AG04449 (cell line): ENCODE measurements at regions of chr7 and their contacts with region 1.

Region 1: GRCh38 chr7:151008511-151009323 is 15.6 kb downstream of the ATG9B start:
- DNase-seq: no peak
- H3K4me3 ChIP-seq: peak overlapping the region; percentile 18
- CTCF ChIP-seq: peak; percentile 68

Region 2: DNA sequence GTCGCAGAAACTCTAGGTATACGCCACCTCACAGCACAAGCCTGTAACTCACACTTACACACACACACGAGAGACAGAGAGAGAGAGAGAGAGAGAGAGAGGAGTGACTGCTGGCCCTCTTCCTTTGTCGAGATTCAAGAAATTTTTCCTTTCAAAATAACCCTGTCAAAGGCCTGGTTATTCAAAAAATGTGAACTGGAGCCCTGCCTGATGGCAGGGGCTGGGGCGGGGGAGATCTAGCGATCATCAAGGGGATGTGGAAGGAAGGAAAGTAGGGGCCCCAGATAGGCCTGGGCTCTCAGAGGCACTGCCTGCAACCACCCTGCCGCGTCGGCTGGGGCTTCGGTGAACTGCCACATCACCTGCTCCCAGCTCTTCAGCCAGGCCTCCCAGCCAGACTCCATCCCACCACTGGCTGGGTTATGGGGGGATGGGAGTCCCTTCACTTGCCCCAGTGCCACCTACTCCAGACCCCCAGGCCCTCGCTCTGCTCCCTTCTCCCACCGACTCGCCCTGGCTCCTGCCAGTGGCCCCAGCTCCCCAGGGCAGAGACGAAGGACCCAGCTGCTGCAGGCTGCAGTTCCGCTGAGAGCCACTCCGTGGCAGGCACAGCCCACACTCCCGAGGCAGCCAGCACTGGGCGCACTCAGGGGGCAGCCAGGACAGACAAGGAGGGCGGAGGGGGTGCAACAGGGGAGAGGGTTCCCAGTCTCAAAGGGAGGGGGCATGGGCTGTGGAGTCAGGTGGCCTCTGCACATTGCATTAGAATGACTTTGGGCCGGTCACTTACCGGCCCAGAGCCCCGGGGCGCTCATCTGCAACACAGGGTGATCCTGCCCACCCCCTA is 45.9 kb before region 1 on chr7:
- CTCF ChIA-PET with region 1: interaction called, 36 read pairs
- POLR2A ChIA-PET with region 1: no interaction called
- DNase-seq: no peak
- H3K4me3 ChIP-seq: no peak overlapping the region
- CTCF ChIP-seq: peak; percentile 97

Region 3: DNA sequence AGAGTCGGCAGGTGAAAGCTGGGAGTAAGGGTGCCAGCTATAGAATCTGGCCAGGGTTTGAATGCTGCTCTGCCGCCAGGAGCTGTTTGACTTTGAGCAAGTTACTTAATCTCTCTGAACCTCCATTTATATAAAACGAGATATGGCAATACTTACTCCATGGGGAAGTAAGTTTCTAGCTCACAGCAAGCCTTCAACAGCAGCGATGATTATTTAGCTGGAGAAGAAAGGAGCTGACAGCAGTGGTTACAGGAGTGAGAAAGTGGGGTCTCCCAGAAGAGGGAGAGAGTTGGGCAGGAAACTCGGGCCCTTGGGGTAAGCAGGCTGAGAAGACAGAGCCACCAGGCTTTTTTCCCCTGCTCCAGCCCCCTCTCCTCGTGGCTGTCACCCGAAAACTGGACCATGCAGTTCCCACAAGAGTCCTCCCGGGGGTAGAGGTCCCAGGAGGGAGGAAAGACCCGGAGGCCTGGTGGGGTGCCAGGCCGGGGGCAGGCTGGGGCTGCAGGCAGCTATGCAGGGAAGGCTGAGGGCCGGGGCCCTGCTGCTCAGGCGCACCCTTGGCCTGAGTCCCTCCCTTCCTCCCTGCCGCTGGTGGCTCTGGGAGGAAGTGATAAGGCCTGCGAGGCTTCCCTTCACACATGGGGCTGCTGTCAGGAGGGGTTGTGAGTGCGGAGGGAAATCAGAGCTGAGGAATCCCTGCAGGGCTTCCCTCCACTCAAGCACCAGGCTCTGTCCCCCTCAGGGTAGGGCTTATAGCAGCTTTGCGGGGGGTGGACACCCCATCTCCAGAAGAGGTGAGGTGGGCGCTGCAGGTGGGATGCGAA is 14.4 kb before region 1 on chr7:
- CTCF ChIA-PET with region 1: interaction called, 12 read pairs
- POLR2A ChIA-PET with region 1: no interaction called
- DNase-seq: no peak
- H3K4me3 ChIP-seq: no peak overlapping the region
- CTCF ChIP-seq: no peak

Region 4: GRCh38 chr7:151028131-151028947 is 19.6 kb after region 1 on chr7 and contains the start of gene ABCB8:
- CTCF ChIA-PET with region 1: interaction called, 65 read pairs
- POLR2A ChIA-PET with region 1: interaction called, 3 read pairs
- DNase-seq: peak; percentile 90
- H3K4me3 ChIP-seq: peak within 1 kb of the TSS; percentile 83
- CTCF ChIP-seq: peak; percentile 42